Ovary (tissue), 10 donors: ENCODE measurements at regions of chr13 and their contacts with region 1.

Region 1: GRCh38 chr13:90615236-90615635 is 732.3 kb upstream of the MIR17HG start:
- DNase-seq: no peak
- H3K4me3 ChIP-seq: no peak overlapping the region
- H3K27ac ChIP-seq: no peak overlapping the region
- H3K4me1 ChIP-seq: no peaks in the 10 kb centered on the region
- H3K27me3 ChIP-seq: no peaks in the 10 kb centered on the region
- CTCF ChIP-seq: no peak
- EP300 ChIP-seq: no peak
- POLR2A ChIP-seq: no peak

Region 2: GRCh38 chr13:90315061-90315460 is 300.2 kb before region 1 on chr13:
- intact Hi-C with region 1: no loop called
- DNase-seq: no peak
- H3K4me3 ChIP-seq: no peak overlapping the region
- H3K27ac ChIP-seq: no peak overlapping the region
- H3K4me1 ChIP-seq: no peaks in the 10 kb centered on the region
- H3K27me3 ChIP-seq: no peaks in the 10 kb centered on the region
- CTCF ChIP-seq: no peak
- EP300 ChIP-seq: no peak
- POLR2A ChIP-seq: no peak

Region 3: GRCh38 chr13:90502153-90502552 is 113.1 kb before region 1 on chr13:
- intact Hi-C with region 1: no loop called
- DNase-seq: no peak
- H3K4me3 ChIP-seq: no peak overlapping the region
- H3K27ac ChIP-seq: no peak overlapping the region
- H3K4me1 ChIP-seq: no peaks in the 10 kb centered on the region
- H3K27me3 ChIP-seq: no peaks in the 10 kb centered on the region
- CTCF ChIP-seq: no peak
- EP300 ChIP-seq: no peak
- POLR2A ChIP-seq: no peak

Region 4: GRCh38 chr13:90632184-90632583 is 16.9 kb after region 1 on chr13:
- intact Hi-C with region 1: loop called in 1 of 4 experiments (anchors 1 kb)
- DNase-seq: no peak
- H3K4me3 ChIP-seq: no peak overlapping the region
- H3K27ac ChIP-seq: no peak overlapping the region
- H3K4me1 ChIP-seq: no peaks in the 10 kb centered on the region
- H3K27me3 ChIP-seq: no peaks in the 10 kb centered on the region
- CTCF ChIP-seq: no peak
- EP300 ChIP-seq: no peak
- POLR2A ChIP-seq: no peak